ENCODE measurements at regions of chr19 and their contacts with region 1.

Region 1: GRCh38 chr19:23273590-23274413 is 23.6 kb upstream of the ZNF724 start:
- DNase-seq: peak; percentile 86 to 99 (median 93)

Region 2: DNA sequence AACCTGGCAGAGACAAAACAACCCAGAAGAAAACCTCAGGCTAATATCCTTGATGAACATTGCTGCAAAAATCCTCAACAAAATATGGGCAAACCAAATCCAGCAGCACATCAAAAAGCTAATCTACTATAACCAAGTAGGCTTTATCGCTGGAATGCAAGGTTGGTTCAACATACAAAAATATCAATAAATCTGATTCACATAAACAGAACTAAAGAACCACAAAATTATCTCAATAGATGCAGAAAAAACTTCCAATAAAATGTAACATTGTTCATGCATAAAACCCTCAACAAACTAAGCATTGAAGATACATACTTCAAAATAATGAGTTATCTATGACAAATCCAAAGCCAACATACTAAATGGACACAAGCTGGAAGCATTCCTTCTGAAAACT is 32.4 kb before region 1 on chr19:
- intact Hi-C with region 1: no loop called
- DNase-seq: no peak

Region 3: DNA sequence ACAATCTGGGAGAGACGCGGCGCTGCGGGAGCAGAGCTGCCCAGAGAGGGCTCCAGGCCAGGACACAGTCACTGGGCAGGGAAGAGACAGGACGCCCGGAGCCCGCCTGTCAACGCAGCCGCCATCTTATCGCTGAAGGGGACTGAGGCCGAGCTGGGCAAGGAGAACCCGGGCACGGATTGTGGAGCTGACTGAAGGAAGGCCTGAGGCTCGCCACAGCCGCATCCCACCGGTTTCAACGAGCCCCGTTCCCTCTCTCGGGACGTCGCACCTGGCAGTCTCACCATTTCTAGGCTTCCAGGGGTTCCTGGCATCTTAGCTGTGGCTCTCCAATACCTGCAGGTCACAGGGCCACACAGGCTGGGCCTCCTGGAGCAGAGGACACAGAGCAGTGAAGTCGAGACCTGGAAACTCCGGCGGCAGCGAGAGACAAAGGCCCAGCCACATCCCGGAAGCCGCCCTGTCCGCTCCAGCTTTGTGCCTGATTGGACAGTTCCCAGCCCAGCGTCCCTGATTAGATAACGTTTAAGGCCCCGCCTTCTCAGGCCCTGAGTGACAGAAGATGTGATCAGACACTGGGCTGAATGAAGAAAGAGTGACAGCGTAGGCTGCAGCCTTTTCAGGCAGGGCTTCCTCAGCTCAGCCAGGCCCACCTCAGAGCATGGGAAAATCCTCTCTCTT is 121.4 kb after region 1 on chr19 and contains the start of gene ZNF91:
- intact Hi-C with region 1: loop called (anchors 10 kb)
- DNase-seq: peak; percentile 93 to 99 (median 96)

Measured in posterior cingulate gyrus (tissue), 11 donors.